Sigmoid colon (tissue), 7 donors: ENCODE measurements at regions of chr6 and their contacts with region 1.

Region 1: DNA sequence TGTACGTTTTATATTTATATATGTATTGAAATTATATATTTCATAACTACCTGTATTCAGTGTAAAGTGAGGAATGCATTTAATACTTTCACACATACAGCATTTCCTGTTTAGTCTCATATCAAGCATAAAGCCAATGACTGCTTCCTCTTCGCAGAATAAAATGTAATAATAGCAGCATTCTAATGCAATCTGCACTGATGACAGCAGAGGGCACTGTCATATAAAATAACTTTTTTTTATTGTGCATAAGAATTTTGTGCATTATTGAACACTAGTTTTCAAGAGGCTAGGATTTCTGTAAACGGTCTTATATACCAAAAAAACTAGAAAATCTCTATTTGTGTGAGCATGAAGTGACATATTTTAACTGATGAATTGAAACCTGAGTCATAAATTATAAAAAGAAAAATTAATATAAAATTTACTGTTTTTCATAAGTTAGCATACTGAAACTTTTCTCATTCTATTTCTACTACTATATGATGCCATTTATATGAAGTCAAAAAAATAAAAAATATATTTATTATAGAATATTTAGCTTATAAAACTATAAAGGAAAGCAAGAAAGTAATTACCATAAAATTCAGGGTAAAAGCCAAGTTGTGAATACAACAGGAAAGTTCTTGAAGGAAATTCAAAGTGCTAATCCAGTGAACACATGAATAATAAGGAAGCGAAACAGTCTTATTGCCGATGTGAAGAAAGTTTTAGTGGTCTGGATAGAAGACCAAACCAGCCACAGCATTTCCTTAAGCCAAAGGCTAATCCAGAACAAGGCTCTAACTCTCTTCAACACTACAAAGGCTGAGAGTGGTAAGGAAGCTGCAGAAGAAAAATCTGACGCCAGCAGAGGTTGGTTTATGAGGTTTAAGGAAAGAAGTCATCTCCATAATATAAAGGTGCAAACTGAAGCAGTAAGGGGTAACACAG is 36.3 kb downstream of the RNF146 start:
- DNase-seq: no peak
- H3K4me3 ChIP-seq: no peak overlapping the region
- H3K27ac ChIP-seq: no peak overlapping the region
- H3K4me1 ChIP-seq: peaks cover 0 to 50% (median 42%) of the 10 kb centered on the region in 4 donors
- H3K27me3 ChIP-seq: no peaks in the 10 kb centered on the region
- CTCF ChIP-seq: peak; percentile 62 to 70 (median 66)
- EP300 ChIP-seq: no peak
- POLR2A ChIP-seq: no peak

Region 2: DNA sequence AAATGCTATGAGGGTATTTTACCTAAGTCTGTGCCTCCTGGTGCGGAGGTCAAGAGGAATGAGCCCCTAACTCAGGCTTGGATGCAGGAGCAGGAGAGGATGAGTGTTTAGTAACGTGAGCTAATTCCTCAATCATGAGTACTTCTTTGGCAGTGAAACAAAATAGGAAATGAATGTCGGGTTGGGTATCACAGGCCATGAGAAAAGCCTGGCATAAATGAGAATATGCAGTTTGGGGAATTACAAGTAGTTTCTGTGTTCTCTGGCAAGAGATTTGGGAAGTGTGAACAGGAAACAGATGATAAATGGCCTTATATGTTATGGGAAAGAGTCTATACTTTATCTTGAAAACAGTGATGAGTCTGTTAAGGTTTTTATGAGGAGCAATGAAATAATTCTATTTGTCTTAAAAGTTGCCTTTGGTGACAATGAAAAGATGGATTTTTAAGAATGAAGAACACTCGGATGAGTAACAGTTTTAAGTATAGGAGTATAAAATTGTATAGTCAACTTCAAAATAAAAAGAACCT is 95.3 kb before region 1 on chr6:
- intact Hi-C with region 1: no loop called
- DNase-seq: no peak
- H3K4me3 ChIP-seq: no peak overlapping the region
- H3K27ac ChIP-seq: no peak overlapping the region
- H3K4me1 ChIP-seq: no peaks in the 10 kb centered on the region
- H3K27me3 ChIP-seq: no peaks in the 10 kb centered on the region
- CTCF ChIP-seq: no peak
- EP300 ChIP-seq: no peak
- POLR2A ChIP-seq: no peak

Region 3: DNA sequence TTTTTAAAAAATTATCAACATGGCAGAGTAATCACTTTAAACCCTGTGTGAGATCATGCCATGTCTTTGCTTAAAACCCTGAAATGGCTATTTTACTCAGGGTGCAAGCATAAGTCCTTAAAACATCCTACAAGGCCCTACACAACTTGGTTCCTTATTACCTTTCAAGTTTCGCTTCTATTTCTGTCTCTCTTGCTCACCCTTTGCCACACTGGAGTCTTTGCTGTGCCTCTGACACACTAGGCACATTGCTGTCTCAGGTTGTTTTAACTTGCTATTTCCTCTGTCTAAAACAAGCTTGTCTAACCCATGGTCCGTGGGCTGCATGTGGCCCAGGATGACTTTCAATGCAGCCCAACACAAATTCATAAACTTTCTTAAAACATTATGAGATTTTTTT is 100.6 kb after region 1 on chr6:
- intact Hi-C with region 1: no loop called
- DNase-seq: no peak
- H3K4me3 ChIP-seq: no peak overlapping the region
- H3K27ac ChIP-seq: no peak overlapping the region
- H3K4me1 ChIP-seq: no peaks in the 10 kb centered on the region
- H3K27me3 ChIP-seq: no peaks in the 10 kb centered on the region
- CTCF ChIP-seq: no peak
- EP300 ChIP-seq: no peak
- POLR2A ChIP-seq: no peak

Region 4: GRCh38 chr6:127539272-127539671 is 236.3 kb after region 1 on chr6:
- intact Hi-C with region 1: loop called (anchors 1 kb)
- DNase-seq: no peak
- H3K4me3 ChIP-seq: no peak overlapping the region
- H3K27ac ChIP-seq: no peak overlapping the region
- H3K4me1 ChIP-seq: no peaks in the 10 kb centered on the region
- H3K27me3 ChIP-seq: no peaks in the 10 kb centered on the region
- CTCF ChIP-seq: peak in 3 of 4 experiments; percentile 19 to 46 (median 31)
- EP300 ChIP-seq: no peak
- POLR2A ChIP-seq: no peak